Activated naive CD4-positive, alpha-beta T cell treated with anti-CD3 and anti-CD28 coated beads for 36 hours (primary cell): ENCODE measurements at regions of chr10 and their contacts with region 1.

Region 1: DNA sequence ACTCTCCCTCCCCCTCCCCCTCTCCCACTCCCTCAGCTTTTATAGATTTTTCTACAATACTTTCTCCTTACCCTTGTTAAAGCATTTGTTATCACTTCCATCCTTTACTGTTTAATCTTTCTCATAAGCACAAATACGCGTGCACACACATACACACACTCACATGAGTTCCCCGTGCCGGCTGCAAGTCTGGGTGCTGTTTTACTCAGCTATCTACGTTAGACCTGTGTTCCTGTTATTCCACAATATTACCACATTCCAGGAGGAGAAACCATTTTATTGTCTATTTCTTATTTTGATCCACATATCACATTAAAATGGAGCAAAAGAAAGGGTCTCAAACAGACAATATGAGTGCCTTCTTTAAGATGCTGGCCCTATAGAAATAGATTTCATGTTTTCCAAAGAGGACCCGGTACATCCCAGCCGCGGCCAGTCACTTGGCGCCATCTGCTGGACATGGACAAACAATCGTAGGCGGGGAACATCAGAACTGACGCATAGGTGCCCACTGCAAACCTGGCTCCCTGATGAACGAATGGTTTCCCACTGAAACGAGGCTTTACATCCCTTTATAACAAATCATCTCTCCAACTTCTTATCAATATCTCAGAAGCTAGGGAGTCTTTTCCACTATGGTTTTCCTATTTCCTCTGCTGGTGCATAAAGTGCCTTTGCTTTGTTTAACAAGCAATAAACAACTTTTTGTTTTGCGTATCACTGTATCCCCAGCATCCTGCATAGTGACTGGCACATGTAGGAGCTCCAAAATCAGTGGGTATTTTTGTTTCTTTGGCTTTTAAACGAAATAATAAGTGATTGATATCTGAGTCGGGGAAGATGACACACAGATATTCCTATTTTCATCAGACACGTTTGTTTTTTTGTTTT is 25.2 kb upstream of the OPTN start:
- DNase-seq: peak; percentile 79
- H3K4me3 Mint-ChIP-seq: no peak overlapping the region
- H3K27ac Mint-ChIP-seq: no peak overlapping the region
- H3K4me1 Mint-ChIP-seq: no peaks in the 10 kb centered on the region
- H3K27me3 Mint-ChIP-seq: peaks cover 20% of the 10 kb centered on the region

Region 2: DNA sequence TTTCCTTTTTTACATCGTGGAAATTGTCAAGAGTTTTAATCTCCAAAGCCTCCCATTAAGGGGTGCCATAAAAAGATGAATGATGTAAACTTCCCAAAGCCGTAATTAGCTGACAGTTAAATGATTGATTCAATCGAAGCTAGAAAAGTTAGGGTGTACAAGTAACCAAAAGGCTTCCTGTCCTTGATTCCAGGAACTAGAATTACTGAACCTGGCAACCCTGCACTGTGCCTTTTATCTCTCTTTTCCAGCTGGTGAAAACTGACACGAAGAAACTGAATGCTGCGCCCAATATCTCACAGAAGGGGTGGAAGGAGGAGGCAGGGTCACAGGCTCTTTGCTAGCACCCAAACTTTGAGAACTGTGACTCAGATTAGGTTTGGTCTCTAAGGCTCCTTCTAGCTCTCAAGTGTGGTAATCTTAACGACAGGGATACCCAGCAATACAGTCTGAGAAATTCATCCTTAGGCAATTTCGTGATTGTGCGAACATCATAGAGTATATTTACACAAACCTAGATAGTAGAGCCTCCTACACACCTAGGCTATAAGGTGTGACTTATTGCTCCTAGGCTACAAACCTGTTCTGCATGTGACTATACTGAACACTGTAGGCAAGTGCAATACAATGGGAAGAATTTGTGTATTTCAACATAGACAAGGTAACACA is 1462.3 kb before region 1 on chr10:
- CTCF ChIA-PET with region 1: no interaction called
- intact Hi-C with region 1: no loop called
- DNase-seq: peak; percentile 31
- H3K4me3 Mint-ChIP-seq: peak overlapping the region; percentile 74
- H3K27ac Mint-ChIP-seq: no peak overlapping the region
- H3K4me1 Mint-ChIP-seq: peaks cover 40% of the 10 kb centered on the region
- H3K27me3 Mint-ChIP-seq: no peaks in the 10 kb centered on the region

Region 3: DNA sequence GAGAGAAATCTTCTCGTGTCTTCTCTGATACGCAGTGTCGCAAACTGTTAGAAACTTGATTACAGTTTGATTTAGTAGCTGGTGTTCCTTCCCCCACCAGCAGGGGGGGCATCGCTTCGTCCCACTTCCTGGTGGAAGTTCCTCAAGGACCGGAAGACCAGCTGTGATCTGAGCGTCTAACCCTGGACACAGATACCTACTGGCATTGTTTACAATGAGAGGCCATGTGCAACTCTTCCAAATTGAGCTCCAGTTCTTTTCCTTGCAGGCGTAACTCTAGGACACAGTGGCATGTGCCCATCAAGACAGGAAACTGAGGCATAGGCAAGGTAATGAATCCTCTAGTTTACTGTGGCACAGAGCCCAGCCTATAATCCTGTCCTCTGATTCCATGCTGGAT is 292.3 kb before region 1 on chr10:
- CTCF ChIA-PET with region 1: interaction called, 6 read pairs
- intact Hi-C with region 1: loop called (anchors 1 kb)
- DNase-seq: peak; percentile 62
- H3K4me3 Mint-ChIP-seq: no peak overlapping the region
- H3K27ac Mint-ChIP-seq: no peak overlapping the region
- H3K4me1 Mint-ChIP-seq: peaks cover 8% of the 10 kb centered on the region
- H3K27me3 Mint-ChIP-seq: no peaks in the 10 kb centered on the region

Region 4: DNA sequence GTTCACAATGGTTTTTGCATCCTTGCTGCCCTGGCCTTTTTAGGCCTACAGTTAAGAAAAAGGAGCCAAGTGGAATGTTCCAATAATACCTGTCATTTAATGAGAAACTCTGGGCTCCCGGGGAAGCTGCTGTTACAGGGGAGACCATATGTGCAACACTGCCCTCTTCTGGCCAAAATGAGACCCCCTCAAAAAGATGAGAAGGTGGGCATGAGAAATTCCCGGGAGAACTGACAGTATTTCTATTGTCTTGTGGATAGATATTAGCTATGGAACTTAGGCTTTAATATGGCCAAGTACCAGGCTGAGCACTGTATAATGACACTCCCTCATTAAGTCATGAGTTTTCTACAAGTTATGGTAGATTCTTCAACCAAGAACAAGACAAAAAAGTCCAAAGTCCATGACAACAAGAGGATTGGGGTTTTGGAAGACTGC is 172.7 kb before region 1 on chr10:
- CTCF ChIA-PET with region 1: interaction called, 3 read pairs
- intact Hi-C with region 1: loop called (anchors 10 kb)
- DNase-seq: peak; percentile 71
- H3K4me3 Mint-ChIP-seq: no peak overlapping the region
- H3K27ac Mint-ChIP-seq: no peak overlapping the region
- H3K4me1 Mint-ChIP-seq: no peaks in the 10 kb centered on the region
- H3K27me3 Mint-ChIP-seq: peaks cover 5% of the 10 kb centered on the region

Region 5: DNA sequence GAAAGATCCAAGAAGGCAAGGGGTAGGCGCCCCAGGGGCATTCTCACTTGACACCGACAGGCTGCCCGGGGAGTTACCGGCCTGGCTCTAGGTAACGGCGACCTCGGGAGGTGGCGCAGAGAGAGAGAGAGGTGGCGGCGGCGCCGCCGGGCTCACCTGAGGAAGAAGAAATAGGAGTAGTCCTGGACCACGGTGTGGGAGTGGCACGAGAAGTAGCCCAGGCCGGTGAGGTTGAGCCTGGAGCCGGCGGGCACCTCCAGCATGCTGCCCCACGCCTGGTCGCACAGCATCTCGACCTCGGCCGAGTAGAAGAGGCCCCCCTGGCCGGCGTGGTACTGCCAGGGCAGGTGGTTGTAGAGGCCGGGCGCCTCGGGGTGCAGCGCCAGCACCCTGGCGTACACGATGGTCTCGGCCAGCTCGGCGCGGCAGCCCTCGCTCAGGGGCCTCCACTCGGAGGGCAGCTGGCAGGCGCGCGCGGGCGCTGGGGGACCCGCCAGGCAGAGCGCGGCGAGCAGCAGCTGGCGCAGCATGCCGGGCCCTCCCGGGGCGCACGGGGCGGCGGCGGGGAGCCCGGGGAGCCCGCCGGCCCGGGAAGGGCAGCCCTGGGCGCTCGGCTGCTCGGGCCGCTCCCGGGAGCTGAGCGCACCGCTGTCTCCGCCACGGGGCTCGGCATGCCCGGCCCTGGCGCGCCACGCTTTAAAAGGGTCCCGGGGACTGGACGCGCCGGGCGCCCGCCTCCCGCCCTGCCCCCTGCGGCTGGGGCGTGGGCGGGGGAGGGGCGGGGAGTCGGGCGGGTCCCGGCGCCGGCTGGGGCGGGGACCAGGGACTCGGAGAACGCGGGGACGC is 73.5 kb before region 1 on chr10 and contains the start of gene CCDC3:
- CTCF ChIA-PET with region 1: no interaction called
- intact Hi-C with region 1: loop called (anchors 5 kb)
- DNase-seq: peak; percentile 8
- H3K4me3 Mint-ChIP-seq: peak within 1 kb of the TSS; percentile 40
- H3K27ac Mint-ChIP-seq: no peak within 1 kb of the TSS
- H3K4me1 Mint-ChIP-seq: peaks cover 4% of the 10 kb centered on the region
- H3K27me3 Mint-ChIP-seq: peaks cover 53% of the 10 kb centered on the region
- total RNA-seq, gene CCDC3: 0.14 TPM in 1 of 2 experiments, not detected in the other